Sciatic nerve (tissue), 2 donors: ENCODE measurements at regions of chr9 and their contacts with region 1.

Region 1: GRCh38 chr9:109238655-109239054 is 71.6 kb upstream of the FRRS1L start:
- DNase-seq: no peak
- ATAC-seq: no peak

Region 2: GRCh38 chr9:108937561-108938305 is 300.9 kb before region 1 on chr9:
- intact Hi-C with region 1: no loop called
- DNase-seq: no peak
- ATAC-seq: no peak

Region 3: DNA sequence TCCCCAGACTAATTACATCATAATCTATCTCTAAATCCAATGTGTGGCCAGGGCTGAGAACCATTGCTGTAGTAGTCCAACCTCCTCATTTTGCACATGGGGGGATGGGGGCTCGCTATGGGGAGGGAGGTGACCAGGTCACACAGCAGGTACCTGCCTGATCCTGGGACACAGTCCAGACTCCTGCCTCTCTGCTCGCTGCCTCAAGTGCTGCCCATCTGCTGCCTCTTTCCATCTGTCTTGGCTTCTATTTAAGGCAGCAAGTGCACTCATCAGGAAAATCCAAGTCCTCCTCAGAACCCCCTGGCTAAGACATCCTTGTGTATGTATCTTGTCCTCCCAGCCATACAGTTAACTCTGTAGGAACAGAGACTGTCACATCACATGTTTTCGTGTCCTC is 13.9 kb before region 1 on chr9:
- intact Hi-C with region 1: no loop called
- DNase-seq: no peak
- ATAC-seq: no peak

Region 4: GRCh38 chr9:109286571-109286977 is 47.9 kb after region 1 on chr9:
- intact Hi-C with region 1: no loop called
- DNase-seq: no peak
- ATAC-seq: no peak

Region 5: GRCh38 chr9:110248356-110248755 is 1009.7 kb after region 1 on chr9:
- intact Hi-C with region 1: loop called (anchors 5 kb)
- DNase-seq: no peak
- ATAC-seq: no peak